CD8-positive, alpha-beta memory T cell (primary cell): ENCODE measurements at regions of chr6 and their contacts with region 1.

Region 1: DNA sequence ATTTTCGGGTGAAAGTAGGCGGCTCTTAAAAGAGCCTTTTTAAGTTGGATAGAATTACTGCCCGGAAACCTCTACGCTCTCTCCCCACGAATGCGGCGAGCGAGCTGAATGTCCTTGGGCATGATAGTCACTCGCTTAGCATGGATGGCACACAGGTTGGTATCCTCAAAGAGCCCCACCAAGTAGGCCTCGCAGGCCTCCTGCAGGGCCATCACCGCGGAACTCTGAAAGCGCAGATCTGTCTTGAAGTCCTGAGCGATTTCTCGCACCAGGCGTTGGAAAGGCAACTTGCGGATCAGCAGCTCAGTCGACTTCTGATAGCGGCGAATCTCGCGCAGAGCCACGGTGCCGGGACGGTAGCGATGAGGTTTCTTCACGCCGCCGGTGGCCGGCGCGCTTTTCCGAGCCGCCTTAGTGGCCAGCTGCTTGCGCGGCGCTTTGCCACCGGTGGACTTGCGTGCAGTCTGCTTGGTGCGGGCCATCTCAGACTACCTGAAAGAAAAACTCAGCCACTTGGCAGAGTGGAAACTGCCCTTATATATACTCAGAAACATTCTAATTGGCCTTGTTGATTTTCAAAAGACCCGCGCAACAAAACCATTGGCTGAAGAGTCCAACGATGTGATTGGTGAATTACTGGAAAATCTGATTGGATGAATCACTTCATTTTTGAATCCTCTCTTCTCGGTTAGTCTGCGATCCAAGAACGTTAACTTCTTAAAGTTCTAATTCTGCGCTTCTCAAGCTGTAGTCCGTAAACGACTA is 93.9 kb upstream of the BTN3A2 start:
- DNase-seq: peak; percentile 61 to 84 (median 82)
- H3K4me3 ChIP-seq: peak overlapping the region; percentile 70
- H3K4me3 Mint-ChIP-seq: no peak overlapping the region
- H3K27ac ChIP-seq: peak overlapping the region; percentile 40
- H3K27ac Mint-ChIP-seq: peak overlapping the region in 5 of 8 donors; percentile 16 to 98 (median 41)
- H3K4me1 ChIP-seq: peaks cover 23% of the 10 kb centered on the region
- H3K4me1 Mint-ChIP-seq: peaks cover 19 to 29% (median 22%) of the 10 kb centered on the region in 3 donors
- H3K27me3 ChIP-seq: no peaks in the 10 kb centered on the region
- H3K27me3 Mint-ChIP-seq: peaks cover 0 to 10% of the 10 kb centered on the region in 2 donors

Region 2: DNA sequence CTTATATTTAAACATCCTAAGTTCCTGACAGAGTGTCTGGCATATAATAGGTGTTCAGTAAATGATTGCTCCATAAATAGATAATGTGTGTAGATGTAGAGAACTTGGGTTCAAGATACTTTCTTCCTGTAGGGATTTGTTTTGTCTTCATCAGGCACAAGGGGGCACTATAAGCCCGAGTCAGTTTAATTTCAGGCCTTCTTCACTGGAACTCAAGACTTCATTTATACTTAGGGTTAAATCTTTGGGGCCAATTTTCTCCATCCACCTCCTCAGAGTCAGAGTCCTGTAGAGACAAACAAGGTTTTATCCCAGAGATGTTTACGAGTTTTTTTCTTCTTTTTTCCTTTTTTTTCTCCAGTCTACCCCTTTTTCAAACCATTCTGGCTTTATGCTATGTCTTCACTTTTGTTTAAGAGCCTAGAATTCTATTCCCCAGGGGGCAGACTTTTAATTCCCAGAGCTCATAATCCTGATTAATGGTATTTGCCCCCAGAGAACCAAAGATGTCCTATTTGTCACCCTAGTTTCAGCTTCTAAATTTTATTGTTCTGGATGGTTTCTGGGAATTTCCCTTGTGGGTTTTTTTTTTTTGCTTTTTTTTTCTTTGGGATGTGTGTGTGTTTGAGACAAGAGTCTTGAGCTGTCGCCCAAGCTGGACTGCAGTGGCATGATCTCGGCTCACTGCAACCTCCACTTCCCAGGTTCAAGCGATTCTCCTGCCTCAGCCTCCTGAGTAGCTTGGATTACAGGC is 95.5 kb before region 1 on chr6:
- CTCF ChIA-PET with region 1: interaction called, 5 read pairs
- POLR2A ChIA-PET with region 1: interaction called, 27 read pairs
- DNase-seq: peak; percentile 8 to 63 (median 52)
- H3K4me3 ChIP-seq: no peak overlapping the region
- H3K4me3 Mint-ChIP-seq: peak overlapping the region in 2 of 7 donors; percentile 21 to 75
- H3K27ac ChIP-seq: no peak overlapping the region
- H3K27ac Mint-ChIP-seq: peak overlapping the region; percentile 8 to 89 (median 78)
- H3K4me1 ChIP-seq: peaks cover 36% of the 10 kb centered on the region
- H3K4me1 Mint-ChIP-seq: peaks cover 30 to 44% (median 40%) of the 10 kb centered on the region in 3 donors
- H3K27me3 ChIP-seq: no peaks in the 10 kb centered on the region
- H3K27me3 Mint-ChIP-seq: peaks cover 0 to 3% of the 10 kb centered on the region in 2 donors

Region 3: GRCh38 chr6:26216356-26216885 is 54.7 kb before region 1 on chr6:
- CTCF ChIA-PET with region 1: interaction called, 36 read pairs
- POLR2A ChIA-PET with region 1: interaction called, 128 read pairs
- DNase-seq: peak; percentile 43 to 93 (median 91)
- H3K4me3 ChIP-seq: peak overlapping the region; percentile 91
- H3K4me3 Mint-ChIP-seq: no peak overlapping the region
- H3K27ac ChIP-seq: peak overlapping the region; percentile 94
- H3K27ac Mint-ChIP-seq: no peak overlapping the region
- H3K4me1 ChIP-seq: peaks cover 23% of the 10 kb centered on the region
- H3K4me1 Mint-ChIP-seq: peaks cover 2 to 8% (median 5%) of the 10 kb centered on the region in 3 donors
- H3K27me3 ChIP-seq: no peaks in the 10 kb centered on the region
- H3K27me3 Mint-ChIP-seq: no peaks in the 10 kb centered on the region

Region 4: GRCh38 chr6:26258200-26258977 is 12.7 kb before region 1 on chr6:
- CTCF ChIA-PET with region 1: interaction called, 6 read pairs
- POLR2A ChIA-PET with region 1: interaction called, 10 read pairs
- DNase-seq: no peak
- H3K4me3 ChIP-seq: no peak overlapping the region
- H3K4me3 Mint-ChIP-seq: peak overlapping the region in 1 of 7 donors; percentile 32
- H3K27ac ChIP-seq: no peak overlapping the region
- H3K27ac Mint-ChIP-seq: no peak overlapping the region
- H3K4me1 ChIP-seq: no peaks in the 10 kb centered on the region
- H3K4me1 Mint-ChIP-seq: peaks cover 4 to 12% (median 6%) of the 10 kb centered on the region in 3 donors
- H3K27me3 ChIP-seq: no peaks in the 10 kb centered on the region
- H3K27me3 Mint-ChIP-seq: no peaks in the 10 kb centered on the region

Region 5: DNA sequence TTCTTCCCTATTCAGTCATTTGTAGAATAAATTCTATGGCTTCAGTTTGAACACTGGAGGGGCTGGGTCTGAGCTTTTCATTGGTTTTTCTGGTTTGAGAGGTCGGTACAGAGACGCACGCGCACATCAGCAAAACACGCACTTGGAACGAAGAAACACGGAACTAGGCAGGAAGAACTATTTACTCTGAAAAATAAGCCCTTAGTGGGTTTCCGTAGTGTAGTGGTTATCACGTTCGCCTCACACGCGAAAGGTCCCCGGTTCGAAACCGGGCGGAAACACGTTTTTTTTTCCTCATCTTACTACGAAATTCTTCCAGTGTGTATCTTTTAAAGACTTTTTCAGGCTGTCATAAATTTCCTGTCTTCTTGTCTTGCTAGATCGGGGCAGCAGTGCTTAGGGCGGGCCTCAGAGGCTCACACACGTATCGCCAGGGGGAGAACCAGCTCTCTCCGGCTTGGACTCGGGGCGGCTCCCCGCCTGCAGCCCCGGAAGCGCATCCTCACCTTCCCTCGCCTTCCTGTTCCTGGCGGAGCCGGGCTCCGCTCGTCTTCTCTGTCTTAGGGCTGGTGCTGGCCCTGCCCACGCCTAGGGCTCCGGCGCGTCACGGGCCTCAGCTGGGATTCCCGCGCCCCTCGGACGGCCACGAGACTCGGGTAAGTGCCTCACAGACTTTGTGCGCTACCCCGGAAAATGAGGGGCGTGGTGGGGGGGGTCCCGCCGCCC is 266.9 kb after region 1 on chr6 and contains the start of gene HMGN4:
- CTCF ChIA-PET with region 1: interaction called, 3 read pairs
- POLR2A ChIA-PET with region 1: interaction called, 19 read pairs
- DNase-seq: peak; percentile 64 to 95 (median 90)
- H3K4me3 ChIP-seq: peak within 1 kb of the TSS; percentile 88
- H3K4me3 Mint-ChIP-seq: peak within 1 kb of the TSS; percentile 92 to 98 (median 94)
- H3K27ac ChIP-seq: peak within 1 kb of the TSS; percentile 89
- H3K27ac Mint-ChIP-seq: peak within 1 kb of the TSS; percentile 92 to 99 (median 96)
- H3K4me1 ChIP-seq: peaks cover 43% of the 10 kb centered on the region
- H3K4me1 Mint-ChIP-seq: peaks cover 56 to 79% (median 72%) of the 10 kb centered on the region in 3 donors
- H3K27me3 ChIP-seq: no peaks in the 10 kb centered on the region
- H3K27me3 Mint-ChIP-seq: peaks cover 0 to 16% of the 10 kb centered on the region in 2 donors
- total RNA-seq, gene HMGN4: 90.0 to 91.4 TPM